KBM-7 (cell line): ENCODE measurements at regions of chr11 and their contacts with region 1.

Region 1: DNA sequence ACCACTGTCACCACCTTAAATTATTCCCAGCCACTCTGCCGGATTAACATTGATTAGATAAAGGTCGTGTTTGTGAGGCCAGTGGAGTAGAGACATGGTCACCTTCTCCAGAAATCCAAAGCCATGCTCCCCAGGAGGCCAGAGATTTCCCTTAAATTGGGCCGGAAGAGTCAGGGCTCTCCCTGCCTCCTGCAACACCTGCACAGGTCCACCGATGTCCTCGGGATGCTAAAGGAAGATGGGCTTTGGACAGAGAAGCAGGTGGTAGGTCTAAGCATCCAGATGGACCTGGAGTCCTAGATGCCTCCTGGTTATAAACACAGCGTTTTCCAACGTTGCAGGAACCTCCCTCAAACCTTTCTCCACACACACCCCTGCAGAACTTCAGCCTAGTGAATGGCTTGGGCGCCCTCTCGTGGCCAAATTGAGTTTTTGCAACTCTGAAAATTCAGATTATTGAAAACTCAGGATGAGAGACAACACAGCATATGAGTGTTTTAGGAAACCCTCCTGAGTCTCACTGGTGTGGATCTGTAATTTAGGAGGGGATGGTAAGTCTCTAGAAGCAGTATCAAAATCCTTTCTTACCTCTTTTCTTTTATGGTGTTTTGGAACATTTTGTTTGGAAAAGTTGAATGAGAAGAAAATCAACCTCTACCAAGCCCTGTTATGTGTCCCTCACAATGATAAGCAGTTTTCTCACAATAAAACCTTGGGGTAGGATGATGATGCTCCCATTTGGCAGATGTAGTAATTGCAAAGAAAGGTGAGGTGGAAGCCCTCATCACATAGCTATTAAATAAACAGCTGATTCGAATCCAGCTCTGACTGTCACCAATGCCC is 109.6 kb downstream of the RRAS2 start:
- DNase-seq: peak; percentile 64

Region 2: DNA sequence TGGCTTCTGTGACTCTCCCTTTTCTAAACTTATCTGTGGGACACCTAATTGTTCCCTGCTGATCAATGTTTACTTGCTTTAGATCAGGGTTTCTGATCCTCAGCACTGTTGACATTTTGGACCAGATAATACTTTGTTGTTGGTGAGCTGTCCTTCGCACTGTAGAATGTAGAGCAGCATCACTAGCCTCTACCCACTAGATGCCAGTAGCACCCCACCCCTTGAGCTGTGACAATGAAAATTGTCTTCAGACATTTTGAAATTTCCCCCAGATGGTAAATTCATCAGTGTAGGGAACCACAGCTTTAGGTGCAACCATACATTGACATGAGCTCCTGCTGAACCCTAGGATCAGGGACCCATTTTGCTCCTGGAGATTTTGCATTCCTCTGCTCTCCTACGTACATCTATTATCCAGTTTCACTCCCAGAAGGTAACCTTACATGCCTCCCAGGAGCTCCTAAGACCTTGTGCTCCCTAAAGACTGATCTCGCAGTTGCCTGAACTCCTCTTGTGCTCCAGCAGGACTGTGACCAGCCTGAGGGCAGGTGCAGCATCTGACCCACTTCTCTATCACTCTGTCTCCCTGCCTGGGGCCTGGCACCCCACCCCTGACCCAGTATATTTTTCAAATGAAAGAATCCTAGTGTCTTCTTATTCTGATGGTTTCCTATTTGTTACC is 473.1 kb before region 1 on chr11:
- in situ Hi-C with region 1: loop called (anchors 25 kb)
- DNase-seq: peak; percentile 19

Region 3: DNA sequence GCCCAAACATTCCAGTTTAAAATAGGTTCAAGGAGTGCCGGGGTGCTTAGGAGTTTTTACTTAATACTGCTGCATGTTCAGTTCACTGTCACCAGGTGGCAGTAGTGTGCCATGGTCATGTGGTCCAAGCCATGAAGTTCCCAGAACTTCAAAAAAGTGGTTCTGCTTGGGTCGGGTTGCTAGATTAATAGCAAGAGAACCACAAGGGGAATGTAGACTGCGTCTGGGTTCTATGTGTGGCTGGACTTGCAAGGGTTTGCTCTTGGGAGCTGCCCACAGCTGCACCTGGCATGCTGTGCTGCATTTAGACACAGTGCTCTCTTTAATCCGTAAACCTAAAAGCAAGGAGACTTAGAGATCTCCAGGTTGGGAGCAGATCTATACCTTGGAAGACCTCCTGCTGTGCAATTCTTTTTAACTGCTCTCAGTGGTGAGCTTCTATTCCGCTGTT is 293.3 kb before region 1 on chr11:
- in situ Hi-C with region 1: loop called (anchors 25 kb)
- DNase-seq: peak; percentile 45